AG04449 (cell line): ENCODE measurements at regions of chr1 and their contacts with region 1.

Region 1: DNA sequence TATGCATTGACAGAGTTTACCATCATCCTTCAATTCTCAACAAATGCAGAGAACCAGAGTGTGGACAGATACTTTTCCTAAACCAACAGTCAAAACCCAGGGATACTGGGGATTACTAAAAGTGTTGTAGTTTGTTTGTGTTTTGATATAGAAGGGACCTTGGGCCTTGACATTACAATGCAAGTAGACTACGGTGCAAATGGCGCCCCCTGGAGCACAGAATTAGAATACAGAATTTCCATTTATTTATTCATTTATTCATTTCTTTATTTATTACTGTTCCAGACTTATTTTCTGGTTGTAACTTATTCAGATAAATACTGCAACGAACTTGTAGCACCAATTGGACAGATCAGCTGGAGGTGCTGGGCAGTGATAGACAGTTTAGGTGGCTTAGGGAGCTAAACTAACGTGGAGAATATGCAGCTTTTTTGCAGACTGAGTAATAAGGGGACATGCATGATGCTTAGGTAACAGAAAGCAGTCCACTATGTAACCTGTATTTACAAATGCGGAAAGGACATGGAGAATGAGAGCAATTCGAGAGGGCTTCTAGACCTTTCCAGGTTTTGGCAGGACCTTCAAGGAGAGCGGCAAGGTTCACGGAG is 42.6 kb downstream of the KIRREL1 start:
- DNase-seq: no peak
- H3K4me3 ChIP-seq: no peak overlapping the region
- CTCF ChIP-seq: peak; percentile 42

Region 2: DNA sequence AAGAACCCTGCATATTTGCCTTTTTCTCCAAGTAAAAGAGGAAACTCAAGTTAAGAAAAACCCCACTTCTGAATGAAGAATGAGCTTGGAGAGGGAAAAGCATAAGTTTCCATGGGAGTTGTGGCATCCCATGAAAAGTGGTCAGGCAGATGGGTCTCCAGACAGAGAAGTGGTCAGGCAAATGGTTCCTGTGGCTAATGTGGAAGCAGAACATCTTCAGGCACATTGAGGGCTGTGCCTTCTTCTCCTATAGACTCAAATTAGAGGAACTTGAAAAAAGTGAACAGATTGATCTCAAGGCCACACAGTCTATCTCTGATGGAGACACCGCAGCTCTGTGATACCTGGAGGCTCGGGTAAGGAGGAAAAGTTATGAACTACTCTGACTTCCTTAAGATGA is 98.3 kb before region 1 on chr1:
- CTCF ChIA-PET with region 1: no interaction called
- POLR2A ChIA-PET with region 1: no interaction called
- DNase-seq: no peak
- H3K4me3 ChIP-seq: no peak overlapping the region
- CTCF ChIP-seq: no peak

Region 3: GRCh38 chr1:158007667-158008386 is 28.3 kb before region 1 on chr1:
- CTCF ChIA-PET with region 1: interaction called, 60 read pairs
- POLR2A ChIA-PET with region 1: interaction called, 3 read pairs
- DNase-seq: no peak
- H3K4me3 ChIP-seq: no peak overlapping the region
- CTCF ChIP-seq: no peak

Region 4: DNA sequence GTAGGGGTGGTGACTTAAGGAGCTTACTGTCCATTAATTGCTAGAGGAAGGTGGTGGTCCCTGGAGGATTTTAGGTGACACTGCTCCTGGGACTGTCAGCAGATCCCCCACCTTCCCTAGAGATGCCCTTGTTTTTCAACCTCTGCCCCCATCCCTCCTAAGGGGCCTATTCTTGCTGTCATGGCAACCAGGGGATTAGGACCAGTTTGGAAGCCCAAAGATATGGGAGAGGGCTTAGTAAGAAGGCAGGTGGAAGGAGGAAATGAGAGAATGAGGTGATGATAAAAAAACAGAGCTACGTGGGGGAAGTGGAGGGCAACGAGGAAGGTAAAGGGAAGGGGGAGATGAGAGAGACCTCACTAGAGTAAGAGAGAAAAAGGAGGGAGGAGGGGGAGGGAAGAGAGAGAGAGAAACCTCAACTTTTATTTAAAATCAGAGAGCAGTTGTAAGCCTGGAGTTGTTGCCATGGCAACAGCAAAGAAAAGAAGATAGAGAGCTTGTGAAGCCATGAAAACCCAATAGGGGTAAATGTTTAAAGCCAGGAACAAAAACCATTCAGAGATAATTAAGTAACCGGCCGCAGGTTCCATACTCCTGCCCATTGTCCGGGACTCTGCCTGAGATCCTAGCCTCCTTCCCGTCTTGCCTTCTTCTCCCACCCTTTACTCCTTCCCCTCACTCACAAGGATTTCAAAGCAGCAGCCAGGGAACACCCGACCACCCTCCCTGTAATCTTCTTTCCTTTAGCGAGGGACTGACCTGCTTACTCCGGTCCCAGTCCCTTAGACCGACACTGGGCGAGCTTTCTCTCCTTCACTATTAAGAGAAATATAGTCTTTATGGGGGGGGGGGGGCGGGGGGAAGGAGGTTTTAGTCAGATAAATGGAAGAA is 22.0 kb before region 1 on chr1:
- CTCF ChIA-PET with region 1: interaction called, 155 read pairs
- POLR2A ChIA-PET with region 1: interaction called, 3 read pairs
- DNase-seq: no peak
- H3K4me3 ChIP-seq: no peak overlapping the region
- CTCF ChIP-seq: no peak

Region 5: DNA sequence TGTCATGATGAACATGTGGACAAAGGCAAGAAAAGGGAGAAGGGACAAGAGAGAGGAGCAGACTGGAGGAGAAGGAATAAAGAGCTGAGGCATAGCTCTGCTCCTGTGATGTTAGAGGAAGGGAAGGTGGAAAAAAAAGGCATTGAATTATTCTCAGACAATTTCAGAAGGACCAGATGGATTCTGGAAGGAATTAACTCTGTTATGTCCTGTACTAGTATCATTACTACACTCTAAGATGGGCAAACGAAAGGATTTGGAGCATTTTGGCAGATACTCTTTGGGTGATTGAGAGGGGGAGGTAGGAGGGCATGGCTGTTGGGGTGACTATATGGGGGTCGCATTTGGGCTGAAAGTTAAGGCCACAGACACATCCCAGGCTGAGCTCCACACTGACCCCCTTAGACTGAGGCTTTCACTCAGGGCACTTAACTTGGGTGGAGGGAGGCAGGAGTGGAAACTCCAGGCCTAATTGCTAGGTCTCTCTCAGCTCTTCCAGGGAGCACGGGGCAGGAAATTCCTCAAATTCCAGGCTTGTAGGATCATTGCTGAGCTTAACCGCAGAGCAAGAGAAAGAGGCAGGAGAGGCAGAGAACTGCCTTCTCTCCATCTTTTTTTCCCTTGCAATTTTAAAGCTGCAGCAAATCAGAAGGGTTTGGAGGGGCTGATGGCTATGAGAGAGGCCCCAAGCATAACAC is 16.8 kb before region 1 on chr1:
- CTCF ChIA-PET with region 1: interaction called, 155 read pairs
- POLR2A ChIA-PET with region 1: interaction called, 3 read pairs
- DNase-seq: peak; percentile 86
- H3K4me3 ChIP-seq: peak overlapping the region; percentile 41
- CTCF ChIP-seq: no peak

Region 6: GRCh38 chr1:158329733-158330132 is 293.7 kb after region 1 on chr1:
- CTCF ChIA-PET with region 1: no interaction called
- POLR2A ChIA-PET with region 1: no interaction called
- DNase-seq: no peak
- H3K4me3 ChIP-seq: no peak overlapping the region
- CTCF ChIP-seq: no peak

Region 7: DNA sequence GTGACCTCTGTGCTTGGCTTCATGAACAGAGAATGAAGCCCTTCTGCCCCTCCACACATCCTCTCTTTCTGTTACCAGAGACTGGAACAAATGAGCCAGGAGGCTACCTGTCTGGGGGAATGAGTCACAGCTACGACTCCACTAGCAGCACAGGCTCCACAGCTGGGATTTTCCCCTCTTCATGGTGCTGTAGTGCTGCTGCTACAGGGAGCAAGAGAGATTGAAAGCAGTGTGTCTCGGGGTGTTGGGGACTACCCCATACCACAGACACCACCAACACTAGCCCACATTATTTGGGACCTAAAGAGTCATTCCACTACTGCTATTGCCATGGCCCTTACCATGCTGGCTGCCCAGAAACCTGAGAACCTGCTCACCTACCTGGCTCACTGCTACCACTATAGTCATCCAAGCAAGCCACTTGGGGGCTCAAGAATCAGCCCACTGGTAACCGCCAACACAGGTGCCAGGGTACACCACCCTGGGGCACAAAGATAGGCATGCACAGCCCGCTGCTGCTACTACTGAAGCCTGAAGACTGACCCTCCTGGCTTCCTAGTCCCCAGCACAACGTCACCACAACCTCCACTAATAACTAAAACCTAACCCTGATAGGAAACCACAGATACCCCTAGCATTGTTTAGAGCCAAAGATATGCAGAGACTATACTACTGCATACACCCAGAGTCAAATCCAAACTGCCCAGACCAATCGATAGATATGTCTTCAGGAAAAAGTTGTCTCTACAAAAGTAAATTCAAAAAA is 335.3 kb after region 1 on chr1:
- CTCF ChIA-PET with region 1: no interaction called
- POLR2A ChIA-PET with region 1: no interaction called
- DNase-seq: no peak
- H3K4me3 ChIP-seq: no peak overlapping the region
- CTCF ChIP-seq: no peak